ENCODE measurements at regions of chrX and their contacts with region 1.

Region 1: DNA sequence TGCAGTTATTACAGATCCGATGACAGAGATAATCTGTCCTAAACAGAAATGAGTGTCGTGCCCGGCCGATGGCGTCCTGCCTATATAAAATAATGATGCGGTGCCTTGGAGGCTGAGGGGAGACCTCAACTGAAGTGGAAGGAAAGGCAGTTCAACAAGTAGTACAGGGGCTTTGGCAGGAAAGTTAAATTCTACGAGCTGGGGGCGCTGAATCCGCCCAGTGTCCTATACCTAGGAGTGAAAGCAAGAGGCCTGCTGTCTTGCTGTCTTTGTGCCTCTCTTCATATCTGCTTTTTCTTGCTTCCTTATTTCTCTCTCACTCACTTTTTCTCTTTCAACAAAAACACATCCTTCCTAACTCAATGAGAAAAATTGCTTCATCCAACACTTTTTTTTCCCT is 82.2 kb upstream of the PRPS2 start:
- DNase-seq: peak in 1 of 2 experiments; percentile 36
- H3K4me3 ChIP-seq: no peak overlapping the region
- H3K4me3 Mint-ChIP-seq: no peak overlapping the region
- H3K27ac Mint-ChIP-seq: no peak overlapping the region
- H3K4me1 ChIP-seq: no peaks in the 10 kb centered on the region
- H3K4me1 Mint-ChIP-seq: no peaks in the 10 kb centered on the region
- H3K27me3 ChIP-seq: no peaks in the 10 kb centered on the region
- H3K27me3 Mint-ChIP-seq: no peaks in the 10 kb centered on the region
- CTCF ChIP-seq: peak in 1 of 2 experiments; percentile 19

Region 2: GRCh38 chrX:12771445-12772069 is 62.5 kb after region 1 on chrX:
- CTCF ChIA-PET with region 1: interaction called, 3 read pairs
- POLR2A ChIA-PET with region 1: no interaction called
- intact Hi-C with region 1: loop called (anchors 1 kb)
- DNase-seq: peak; percentile 39 to 62
- H3K4me3 ChIP-seq: no peak overlapping the region
- H3K4me3 Mint-ChIP-seq: no peak overlapping the region
- H3K27ac Mint-ChIP-seq: no peak overlapping the region
- H3K4me1 ChIP-seq: no peaks in the 10 kb centered on the region
- H3K4me1 Mint-ChIP-seq: no peaks in the 10 kb centered on the region
- H3K27me3 ChIP-seq: no peaks in the 10 kb centered on the region
- H3K27me3 Mint-ChIP-seq: peaks cover 4% of the 10 kb centered on the region
- CTCF ChIP-seq: peak; percentile 80 to 91

Measured in Caco-2 (cell line).